Posterior vena cava (tissue), 2 donors: ENCODE measurements at regions of chr3 and their contacts with region 1.

Region 1: GRCh38 chr3:197906023-197906849 is 43.8 kb upstream of the RPL35A start:
- DNase-seq: peak; percentile 96

Region 2: GRCh38 chr3:197936819-197937384 is 30.7 kb after region 1 on chr3:
- intact Hi-C with region 1: no loop called
- DNase-seq: no peak

Region 3: DNA sequence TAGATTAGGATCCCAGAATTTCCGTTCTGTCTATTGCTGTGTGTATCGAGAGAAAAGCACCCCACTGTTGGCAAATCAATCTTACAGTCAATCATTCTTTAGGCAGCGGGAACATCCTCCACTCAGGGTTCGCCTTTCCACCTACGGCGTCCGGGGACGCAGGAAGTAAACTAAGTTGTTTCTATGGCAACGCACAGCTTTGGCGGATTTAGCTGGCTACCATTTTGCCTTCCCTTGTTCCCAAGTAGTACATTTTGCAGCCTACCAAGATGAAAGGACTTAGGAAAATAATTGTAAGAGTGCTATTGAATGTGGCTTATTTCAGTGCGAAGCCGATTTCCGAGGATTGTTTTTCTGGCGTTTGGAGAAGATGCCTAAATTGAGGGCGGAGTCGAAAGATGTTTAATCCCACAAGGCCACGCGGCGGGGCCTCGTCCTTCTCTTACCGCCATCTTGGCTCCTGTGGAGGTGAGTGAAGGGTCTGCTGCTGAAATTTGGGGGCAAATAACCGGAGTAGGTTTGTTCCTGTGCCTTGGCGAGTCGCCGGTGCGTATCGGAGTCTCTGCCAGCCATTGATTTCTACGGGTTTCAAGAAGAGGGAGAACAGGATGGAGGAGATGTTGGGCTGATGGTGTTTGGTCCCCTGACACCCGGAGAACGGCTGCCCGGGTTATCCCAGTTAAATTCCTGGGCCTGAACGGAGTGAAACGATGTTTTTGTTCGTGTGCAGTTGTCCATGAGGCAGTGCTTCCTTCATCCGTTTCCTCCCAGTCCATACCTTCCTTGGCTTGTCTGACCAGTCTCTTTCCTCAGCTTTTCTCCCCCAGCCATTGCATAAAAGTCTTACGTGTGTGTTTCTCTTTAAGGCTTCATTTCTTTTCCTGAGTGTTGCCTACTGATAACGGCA is 43.8 kb after region 1 on chr3 and contains the start of gene RPL35A:
- intact Hi-C with region 1: loop called in 1 of 2 experiments (anchors 5 kb)
- DNase-seq: peak; percentile 96
- total RNA-seq, gene RPL35A: 655 to 664 TPM